ENCODE measurements at regions of chr9 and their contacts with region 1.

Region 1: GRCh38 chr9:127224178-127224882 is 40.2 kb upstream of the GARNL3 start:
- DNase-seq: peak; percentile 86 to 90 (median 87)
- H3K4me3 ChIP-seq: peak overlapping the region in 1 of 2 donors; percentile 53
- H3K4me3 Mint-ChIP-seq: peak overlapping the region; percentile 77 to 90 (median 87)
- H3K27ac ChIP-seq: no peak overlapping the region
- H3K27ac Mint-ChIP-seq: peak overlapping the region; percentile 79 to 96 (median 93)
- H3K4me1 ChIP-seq: peaks cover 35% of the 10 kb centered on the region
- H3K4me1 Mint-ChIP-seq: peaks cover 23 to 48% (median 33%) of the 10 kb centered on the region in 4 donors
- H3K27me3 ChIP-seq: no peaks in the 10 kb centered on the region
- H3K27me3 Mint-ChIP-seq: peaks cover 0 to 6% of the 10 kb centered on the region in 2 donors

Region 2: GRCh38 chr9:127244609-127245601 is 20.6 kb after region 1 on chr9:
- CTCF ChIA-PET with region 1: interaction called, 3 read pairs
- POLR2A ChIA-PET with region 1: interaction called, 10 read pairs
- intact Hi-C with region 1: loop called (anchors 1 kb)
- DNase-seq: peak; percentile 91 to 95 (median 91)
- H3K4me3 ChIP-seq: peak overlapping the region; percentile 65 to 69
- H3K4me3 Mint-ChIP-seq: peak overlapping the region; percentile 83 to 93 (median 86)
- H3K27ac ChIP-seq: no peak overlapping the region
- H3K27ac Mint-ChIP-seq: peak overlapping the region; percentile 47 to 86 (median 65)
- H3K4me1 ChIP-seq: peaks cover 12% of the 10 kb centered on the region
- H3K4me1 Mint-ChIP-seq: peaks cover 4 to 13% (median 8%) of the 10 kb centered on the region in 4 donors
- H3K27me3 ChIP-seq: no peaks in the 10 kb centered on the region
- H3K27me3 Mint-ChIP-seq: peaks cover 0 to 2% of the 10 kb centered on the region in 2 donors

Region 3: DNA sequence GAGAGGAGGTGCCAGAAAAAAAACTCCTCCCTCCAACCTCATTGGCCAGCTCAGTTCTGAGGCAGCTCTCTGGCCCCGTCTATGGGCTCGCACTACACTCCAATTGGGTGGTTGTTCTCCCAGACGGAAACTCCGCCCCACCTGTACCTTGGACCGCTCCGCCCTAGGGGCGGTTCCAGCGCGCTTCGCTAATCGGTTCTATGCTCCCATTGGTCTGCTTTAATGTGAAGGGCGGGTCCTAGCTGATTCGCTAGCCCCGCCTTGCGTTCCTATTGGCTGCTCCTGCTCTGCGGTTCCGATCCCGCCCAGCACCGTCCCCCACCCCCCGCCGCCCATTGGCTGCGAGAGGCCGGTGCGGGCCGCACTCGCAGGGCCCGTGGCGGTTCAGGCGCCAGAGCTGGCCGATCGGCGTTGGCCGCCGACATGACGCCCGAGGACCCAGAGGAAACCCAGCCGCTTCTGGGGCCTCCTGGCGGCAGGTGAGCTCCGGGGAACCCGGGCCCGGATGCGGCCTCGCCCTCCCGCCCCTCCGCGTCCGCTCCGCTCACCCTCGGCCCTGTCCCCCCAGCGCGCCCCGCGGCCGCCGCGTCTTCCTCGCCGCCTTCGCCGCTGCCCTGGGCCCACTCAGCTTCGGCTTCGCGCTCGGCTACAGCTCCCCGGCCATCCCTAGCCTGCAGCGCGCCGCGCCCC is 172.6 kb after region 1 on chr9 and contains the start of gene SLC2A8:
- CTCF ChIA-PET with region 1: interaction called, 6 read pairs
- POLR2A ChIA-PET with region 1: interaction called, 10 read pairs
- intact Hi-C with region 1: loop called (anchors 2 kb)
- DNase-seq: peak; percentile 90 to 97 (median 95)
- H3K4me3 ChIP-seq: peak within 1 kb of the TSS; percentile 3 to 45
- H3K4me3 Mint-ChIP-seq: peak within 1 kb of the TSS; percentile 57 to 87 (median 69)
- H3K27ac ChIP-seq: no peak within 1 kb of the TSS
- H3K27ac Mint-ChIP-seq: peak within 1 kb of the TSS in 3 of 7 donors; percentile 13 to 86 (median 65)
- H3K4me1 ChIP-seq: peaks cover 19% of the 10 kb centered on the region
- H3K4me1 Mint-ChIP-seq: peaks cover 5 to 23% (median 13%) of the 10 kb centered on the region in 4 donors
- H3K27me3 ChIP-seq: peaks cover 50% of the 10 kb centered on the region
- H3K27me3 Mint-ChIP-seq: peaks cover 43 to 44% of the 10 kb centered on the region in 2 donors
- total RNA-seq, gene SLC2A8: 2.1 to 2.3 TPM

Region 4: GRCh38 chr9:127568971-127569885 is 344.9 kb after region 1 on chr9:
- CTCF ChIA-PET with region 1: no interaction called
- POLR2A ChIA-PET with region 1: no interaction called
- intact Hi-C with region 1: loop called (anchors 10 kb)
- DNase-seq: peak; percentile 72 to 78 (median 75)
- H3K4me3 ChIP-seq: peak overlapping the region; percentile 29 to 62
- H3K4me3 Mint-ChIP-seq: peak overlapping the region; percentile 79 to 94 (median 89)
- H3K27ac ChIP-seq: peak overlapping the region; percentile 56
- H3K27ac Mint-ChIP-seq: peak overlapping the region; percentile 82 to 97 (median 94)
- H3K4me1 ChIP-seq: peaks cover 36% of the 10 kb centered on the region
- H3K4me1 Mint-ChIP-seq: peaks cover 17 to 27% (median 21%) of the 10 kb centered on the region in 4 donors
- H3K27me3 ChIP-seq: no peaks in the 10 kb centered on the region
- H3K27me3 Mint-ChIP-seq: no peaks in the 10 kb centered on the region

Measured in CD4-positive, alpha-beta memory T cell (primary cell).